OCI-LY7 (cell line): ENCODE measurements at regions of chr3 and their contacts with region 1.

Region 1: GRCh38 chr3:94062431-94063404 is at the starts of genes DHFR2 and NSUN3:
- DNase-seq: peak; percentile 98
- H3K4me3 ChIP-seq: peak within 1 kb of the TSS; percentile 91
- H3K27ac ChIP-seq: peak within 1 kb of the TSS; percentile 94
- H3K4me1 ChIP-seq: peaks cover 27% of the 10 kb centered on the region
- CTCF ChIP-seq: no peak
- total RNA-seq, gene DHFR2: 4.5 and 5.0 TPM in 2 replicates
- total RNA-seq, gene NSUN3: 10.4 and 16.4 TPM in 2 replicates

Region 2: DNA sequence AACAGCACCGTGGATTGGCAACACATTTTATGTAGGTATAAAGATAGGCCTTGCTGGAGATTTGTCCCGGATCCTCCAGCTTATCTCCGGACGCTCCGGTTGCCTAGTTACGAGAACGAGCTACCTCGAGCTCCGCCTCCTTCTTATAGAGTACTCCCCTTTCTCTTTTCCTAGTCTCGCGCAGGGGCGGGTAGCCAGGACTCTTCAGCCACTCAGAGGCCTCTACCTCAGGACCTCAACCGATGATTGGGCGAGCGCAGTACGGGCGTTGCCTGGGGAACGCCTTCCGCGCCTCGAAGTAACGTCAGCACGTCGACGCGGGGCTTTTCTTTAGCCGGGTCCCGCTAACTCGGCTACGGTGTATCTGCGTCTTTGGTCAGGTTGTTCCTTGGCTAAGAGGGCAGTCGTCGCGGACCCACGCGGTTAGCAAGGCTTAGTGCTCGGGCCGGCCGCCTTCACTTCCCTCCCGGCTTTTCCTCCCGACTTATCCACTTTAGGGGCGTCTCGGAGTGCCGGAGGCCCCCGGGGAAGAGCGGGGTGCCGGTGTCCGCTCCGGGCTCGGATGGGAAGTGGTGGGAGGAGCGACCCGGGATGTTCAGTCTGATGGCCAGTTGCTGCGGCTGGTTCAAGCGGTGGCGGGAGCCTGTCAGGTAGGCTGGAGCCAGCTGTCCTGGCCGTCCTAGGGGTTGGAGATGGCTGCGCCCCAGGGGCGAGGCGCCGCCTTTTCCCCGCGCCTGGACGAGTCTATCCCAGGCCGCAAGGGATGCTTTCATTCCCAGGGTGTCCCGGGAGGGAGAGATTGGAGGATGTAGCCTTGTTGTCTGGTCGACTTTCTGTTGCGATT is 82.7 kb before region 1 on chr3 and contains the start of gene ARL13B:
- CTCF ChIA-PET with region 1: no interaction called
- POLR2A ChIA-PET with region 1: interaction called, 10 read pairs
- intact Hi-C with region 1: loop called (anchors 2 kb)
- DNase-seq: peak; percentile 97
- H3K4me3 ChIP-seq: peak within 1 kb of the TSS; percentile 85
- H3K27ac ChIP-seq: peak within 1 kb of the TSS; percentile 9
- H3K4me1 ChIP-seq: peaks cover 6% of the 10 kb centered on the region
- CTCF ChIP-seq: no peak
- total RNA-seq, gene ARL13B: 5.4 and 5.9 TPM in 2 replicates

Region 3: DNA sequence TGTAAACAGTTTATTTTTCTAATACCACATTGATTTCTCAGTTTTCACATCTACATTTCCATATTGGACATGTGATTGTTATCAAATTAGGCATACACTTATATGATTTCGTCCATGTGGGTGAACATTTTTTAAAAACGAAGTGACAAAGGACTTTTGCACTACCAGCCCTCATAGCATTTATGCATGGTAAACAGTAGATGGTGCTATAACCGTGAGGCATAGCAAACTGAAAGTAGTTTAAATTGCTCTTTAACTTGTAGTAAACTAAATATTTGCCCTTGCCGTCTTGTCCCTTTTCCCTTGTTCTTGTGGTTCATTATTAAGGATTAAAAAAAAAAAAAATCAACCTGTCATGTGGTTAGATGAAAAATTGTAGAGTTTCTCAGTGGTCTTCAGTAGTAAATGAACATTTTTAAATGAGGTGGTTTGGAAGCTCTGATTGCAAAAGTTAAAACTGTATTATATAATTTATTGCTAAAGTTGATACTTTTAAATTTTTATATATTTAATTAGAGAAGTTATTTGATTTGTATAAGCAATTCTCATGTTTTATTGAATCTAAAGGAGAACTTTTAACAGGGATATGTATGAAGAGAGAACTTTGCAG is 58.3 kb before region 1 on chr3:
- CTCF ChIA-PET with region 1: no interaction called
- POLR2A ChIA-PET with region 1: interaction called, 7 read pairs
- intact Hi-C with region 1: loop called (anchors 1 kb)
- DNase-seq: peak; percentile 67
- H3K4me3 ChIP-seq: no peak overlapping the region
- H3K27ac ChIP-seq: no peak overlapping the region
- H3K4me1 ChIP-seq: no peaks in the 10 kb centered on the region
- CTCF ChIP-seq: peak; percentile 98

Region 4: DNA sequence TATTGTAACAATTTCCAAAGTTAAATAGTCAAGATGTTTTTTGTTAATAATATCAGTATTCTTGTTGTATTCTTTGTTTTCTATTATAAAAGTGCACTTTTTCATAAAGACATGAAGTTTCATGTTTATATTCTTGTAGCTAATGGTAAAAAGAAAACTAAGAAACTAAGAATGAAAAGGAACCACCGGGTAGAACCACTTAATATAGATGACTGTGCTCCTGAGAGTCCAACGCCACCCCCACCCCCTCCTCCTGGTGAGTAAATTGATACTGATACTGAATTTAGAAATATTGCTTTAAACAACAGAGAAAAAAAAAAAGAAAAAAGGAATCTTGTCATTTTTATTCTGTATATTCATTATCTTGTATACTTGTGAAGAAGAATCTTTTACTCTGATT is 13.5 kb before region 1 on chr3:
- CTCF ChIA-PET with region 1: no interaction called
- POLR2A ChIA-PET with region 1: interaction called, 23 read pairs
- intact Hi-C with region 1: no loop called
- DNase-seq: no peak
- H3K4me3 ChIP-seq: no peak overlapping the region
- H3K27ac ChIP-seq: no peak overlapping the region
- H3K4me1 ChIP-seq: no peaks in the 10 kb centered on the region
- CTCF ChIP-seq: no peak

Region 5: GRCh38 chr3:94162700-94163099 is 100.0 kb after region 1 on chr3:
- CTCF ChIA-PET with region 1: no interaction called
- POLR2A ChIA-PET with region 1: no interaction called
- intact Hi-C with region 1: no loop called
- DNase-seq: no peak
- H3K4me3 ChIP-seq: no peak overlapping the region
- H3K27ac ChIP-seq: no peak overlapping the region
- H3K4me1 ChIP-seq: no peaks in the 10 kb centered on the region
- CTCF ChIP-seq: no peak